Motor neuron (in vitro differentiated cells): ENCODE measurements at regions of chr13 and their contacts with region 1.

Region 1: GRCh38 chr13:32586080-32586900 is at the start of gene PDS5B:
- ATAC-seq: peak; percentile 79 to 93 (median 90)
- H3K4me3 ChIP-seq: peak within 1 kb of the TSS; percentile 69 to 82 (median 74)
- H3K27ac ChIP-seq: peak within 1 kb of the TSS; percentile 86 to 91
- H3K4me1 ChIP-seq: peaks cover 6 to 15% of the 10 kb centered on the region in 2 donors
- total RNA-seq, gene PDS5B: 30.4 to 79.0 (median 43.5) TPM

Region 2: GRCh38 chr13:32200749-32201148 is 385.5 kb before region 1 on chr13:
- in situ Hi-C with region 1: no loop called
- ATAC-seq: peak in 1 of 8 experiments; percentile 9
- H3K4me3 ChIP-seq: no peak overlapping the region
- H3K27ac ChIP-seq: no peak overlapping the region
- H3K4me1 ChIP-seq: no peaks in the 10 kb centered on the region

Region 3: GRCh38 chr13:32911506-32911905 is 325.2 kb after region 1 on chr13:
- in situ Hi-C with region 1: loop called in 1 of 9 experiments (anchors 25 kb)
- ATAC-seq: peak; percentile 61 to 100 (median 90)
- H3K4me3 ChIP-seq: no peak overlapping the region
- H3K27ac ChIP-seq: no peak overlapping the region
- H3K4me1 ChIP-seq: no peaks in the 10 kb centered on the region